ENCODE measurements at regions of chr1 and their contacts with region 1.

Region 1: DNA sequence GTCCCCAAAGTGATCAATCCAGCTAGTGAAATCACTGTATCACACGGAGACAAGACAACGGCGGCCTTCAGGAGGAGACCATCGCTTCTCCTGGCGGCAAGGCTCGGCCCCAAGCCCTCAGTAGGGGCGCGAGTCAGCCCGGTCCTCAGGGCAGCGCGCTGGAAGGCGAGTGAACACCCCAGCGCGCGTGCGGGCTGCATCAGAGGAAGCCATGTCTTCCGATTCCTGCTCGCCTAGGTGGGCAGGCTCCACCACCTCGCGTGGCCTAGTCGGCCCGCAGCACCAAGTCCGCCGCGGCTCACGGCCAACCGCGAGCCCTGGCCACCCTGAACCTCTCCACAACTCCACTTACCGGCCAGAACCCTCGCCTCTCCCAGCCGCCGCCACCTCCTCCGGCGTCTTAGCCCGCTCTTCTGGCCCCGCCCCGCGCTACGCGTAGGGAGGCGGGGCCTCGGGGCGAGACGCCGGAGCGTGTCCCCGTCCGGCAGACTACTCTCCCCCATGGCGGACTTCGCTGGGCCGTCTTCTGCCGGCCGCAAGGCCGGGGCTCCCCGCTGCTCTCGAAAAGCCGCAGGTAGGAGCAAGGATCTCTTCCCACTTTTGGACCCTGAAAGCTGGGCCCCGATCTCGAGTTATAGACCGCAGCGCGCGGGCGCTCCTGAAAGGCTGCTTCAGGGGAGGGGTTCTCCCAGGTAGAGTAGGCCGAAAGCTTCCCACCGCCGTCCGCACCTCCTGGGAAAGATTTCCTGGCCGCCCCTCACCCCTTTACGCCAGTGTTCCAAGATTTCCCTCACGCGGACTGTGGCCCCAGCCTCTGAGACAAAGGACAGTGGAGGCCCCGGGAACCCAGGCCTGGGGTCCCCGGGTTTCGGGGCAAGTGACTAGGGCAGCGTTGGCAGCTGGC is at the starts of genes GLMN and RPAP2:
- DNase-seq: peak; percentile 73 to 79 (median 77)
- H3K4me3 ChIP-seq: peak within 1 kb of the TSS; percentile 64 to 86 (median 80)
- H3K4me3 Mint-ChIP-seq: peak within 1 kb of the TSS; percentile 87 to 99
- H3K27ac ChIP-seq: peak within 1 kb of the TSS; percentile 78 to 95
- H3K27ac Mint-ChIP-seq: peak within 1 kb of the TSS; percentile 94 to 99 (median 98)
- H3K4me1 ChIP-seq: peaks cover 10 to 19% of the 10 kb centered on the region in 2 donors
- H3K4me1 Mint-ChIP-seq: peaks cover 20% of the 10 kb centered on the region
- H3K27me3 ChIP-seq: no peaks in the 10 kb centered on the region
- H3K27me3 Mint-ChIP-seq: no peaks in the 10 kb centered on the region
- CTCF ChIP-seq: no peak
- polyA plus RNA-seq, gene GLMN: 2.1 to 4.1 (median 2.6) TPM
- polyA plus RNA-seq, gene RPAP2: 4.4 to 7.8 (median 7.3) TPM

Region 2: GRCh38 chr1:92080128-92080985 is 218.5 kb before region 1 on chr1 and contains the start of gene BTBD8:
- intact Hi-C with region 1: loop called in 1 of 2 experiments (anchors 10 kb)
- DNase-seq: peak; percentile 73 to 78 (median 74)
- H3K4me3 ChIP-seq: peak within 1 kb of the TSS; percentile 57 to 87 (median 66)
- H3K4me3 Mint-ChIP-seq: peak within 1 kb of the TSS; percentile 99 to 100
- H3K27ac ChIP-seq: peak within 1 kb of the TSS; percentile 21 to 78
- H3K27ac Mint-ChIP-seq: peak within 1 kb of the TSS; percentile 82 to 95 (median 92)
- H3K4me1 ChIP-seq: peaks cover 8 to 10% of the 10 kb centered on the region in 2 donors
- H3K4me1 Mint-ChIP-seq: peaks cover 10% of the 10 kb centered on the region
- H3K27me3 ChIP-seq: no peaks in the 10 kb centered on the region
- H3K27me3 Mint-ChIP-seq: peaks cover 0 to 2% (median 2%) of the 10 kb centered on the region in 3 donors
- CTCF ChIP-seq: peak; percentile 17
- polyA plus RNA-seq, gene BTBD8: 0.44 to 1.1 (median 0.88) TPM

Region 3: GRCh38 chr1:92123868-92124267 is 175.0 kb before region 1 on chr1:
- intact Hi-C with region 1: no loop called
- DNase-seq: no peak
- H3K4me3 ChIP-seq: no peak overlapping the region
- H3K4me3 Mint-ChIP-seq: no peak overlapping the region
- H3K27ac ChIP-seq: no peak overlapping the region
- H3K27ac Mint-ChIP-seq: no peak overlapping the region
- H3K4me1 ChIP-seq: no peaks in the 10 kb centered on the region
- H3K4me1 Mint-ChIP-seq: no peaks in the 10 kb centered on the region
- H3K27me3 ChIP-seq: no peaks in the 10 kb centered on the region
- H3K27me3 Mint-ChIP-seq: peaks cover 0 to 1% (median 0%) of the 10 kb centered on the region in 3 donors
- CTCF ChIP-seq: no peak

Region 4: GRCh38 chr1:92485381-92486257 is 186.8 kb after region 1 on chr1:
- intact Hi-C with region 1: loop called in 1 of 2 experiments (anchors 10 kb)
- DNase-seq: peak in 2 of 3 donors; percentile 17 to 22
- H3K4me3 ChIP-seq: peak overlapping the region; percentile 62 to 94 (median 71)
- H3K4me3 Mint-ChIP-seq: peak overlapping the region; percentile 95 to 98
- H3K27ac ChIP-seq: no peak overlapping the region
- H3K27ac Mint-ChIP-seq: peak overlapping the region in 1 of 7 donors; percentile 21
- H3K4me1 ChIP-seq: peaks cover 40 to 48% of the 10 kb centered on the region in 2 donors
- H3K4me1 Mint-ChIP-seq: peaks cover 39% of the 10 kb centered on the region
- H3K27me3 ChIP-seq: peaks cover 0 to 31% of the 10 kb centered on the region in 2 donors
- H3K27me3 Mint-ChIP-seq: peaks cover 27 to 41% (median 30%) of the 10 kb centered on the region in 3 donors
- CTCF ChIP-seq: peak; percentile 53

Measured in CD14-positive monocyte (primary cell).